ENCODE measurements at regions of chr3 and their contacts with region 1.

Region 1: DNA sequence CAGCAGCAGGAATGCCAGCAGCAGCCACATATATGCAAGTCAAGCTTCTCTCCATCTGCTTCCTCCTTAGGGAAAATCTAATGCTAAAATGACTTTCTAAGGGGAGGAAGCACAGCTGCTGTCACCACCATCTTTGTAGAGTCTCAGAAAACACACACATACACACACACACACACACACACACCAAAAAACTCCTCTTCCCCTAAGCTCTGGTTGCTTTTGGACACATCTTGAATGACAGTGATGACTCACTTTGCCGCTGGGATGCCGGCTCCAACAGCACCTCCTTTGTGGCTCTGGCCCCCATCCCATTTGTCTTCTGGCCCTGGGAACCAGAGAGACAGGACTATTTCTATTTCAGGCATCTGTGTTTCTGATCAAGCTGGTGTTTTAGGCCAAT is 124.8 kb upstream of the GOLIM4 start:
- DNase-seq: no peak

Region 2: DNA sequence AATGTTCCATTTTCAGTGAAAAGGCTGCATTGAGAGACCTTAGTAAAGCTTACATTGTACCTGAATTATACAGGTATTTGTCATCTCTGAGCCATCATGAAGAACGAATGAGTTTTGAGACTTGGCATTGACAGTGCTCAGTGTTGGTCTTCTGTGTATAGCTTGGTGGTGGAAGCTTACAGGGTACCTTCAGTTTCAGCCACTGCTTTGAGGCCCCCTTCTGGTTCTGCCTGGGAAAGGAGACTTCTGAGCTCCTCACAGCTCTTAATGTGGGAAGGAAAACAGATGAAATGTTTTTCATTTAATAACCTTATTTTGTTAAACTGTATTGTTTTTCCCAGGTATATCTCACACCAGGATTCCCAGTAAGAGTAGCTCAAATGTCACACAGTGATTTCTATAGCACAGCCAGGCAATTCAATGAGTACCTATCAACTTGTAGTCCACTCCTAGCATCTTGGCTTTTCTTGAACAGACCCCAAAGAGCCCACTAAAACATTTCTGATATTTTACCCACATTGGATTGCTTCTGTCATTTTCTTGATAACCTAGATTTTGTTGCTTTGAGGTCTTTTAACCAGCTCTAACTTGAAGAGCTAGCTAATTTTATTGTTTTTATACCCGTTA is 479.5 kb before region 1 on chr3:
- intact Hi-C with region 1: no loop called
- DNase-seq: no peak

Region 3: DNA sequence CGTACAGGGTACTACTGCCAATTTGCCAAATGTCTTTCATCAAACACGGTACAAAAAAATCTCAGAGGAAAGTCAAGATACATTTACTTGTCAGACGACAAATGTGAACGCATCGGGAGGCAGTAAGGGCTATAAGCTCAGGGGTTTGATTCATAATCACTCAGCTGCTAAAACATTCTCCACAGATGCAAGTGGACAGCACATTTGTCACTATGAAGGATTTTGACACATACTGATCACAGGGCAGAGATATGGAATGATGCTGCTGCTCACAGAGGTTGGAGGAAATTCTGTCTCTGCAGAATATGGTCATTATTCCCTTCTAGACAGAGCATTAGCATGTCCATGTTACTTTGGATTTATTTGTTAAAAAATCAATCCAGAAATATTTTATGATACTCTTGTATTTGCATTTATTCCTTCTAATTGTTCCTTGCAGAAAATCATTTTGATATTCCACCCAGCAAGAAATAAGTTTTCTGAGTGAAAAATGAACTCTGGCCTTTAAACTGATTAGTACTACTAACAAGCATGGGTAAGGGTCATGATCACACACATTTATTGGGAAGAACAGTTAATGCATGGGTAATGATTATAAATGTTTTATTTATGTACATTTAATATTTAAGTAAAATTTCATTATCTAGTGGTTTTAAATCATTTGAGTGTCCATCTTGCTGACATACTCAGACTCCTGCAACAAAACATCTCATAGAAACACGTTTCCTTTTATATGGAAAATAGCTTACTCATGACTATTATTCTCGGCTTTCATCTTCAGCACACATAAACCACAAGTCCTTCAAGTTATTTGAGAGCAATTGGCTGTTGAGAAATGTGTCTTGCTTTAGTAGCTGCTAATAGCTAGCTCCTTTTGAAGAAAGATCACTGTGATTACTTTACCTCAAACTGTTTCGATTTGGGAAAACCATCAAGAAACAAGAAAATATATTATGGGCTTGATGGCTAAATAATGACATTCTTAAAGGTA is 883.7 kb after region 1 on chr3:
- intact Hi-C with region 1: loop called in 1 of 2 experiments (anchors 10 kb)
- DNase-seq: no peak

Measured in posterior vena cava (tissue), 2 donors.